ENCODE measurements at regions of chr11 and their contacts with region 1.

Region 1: DNA sequence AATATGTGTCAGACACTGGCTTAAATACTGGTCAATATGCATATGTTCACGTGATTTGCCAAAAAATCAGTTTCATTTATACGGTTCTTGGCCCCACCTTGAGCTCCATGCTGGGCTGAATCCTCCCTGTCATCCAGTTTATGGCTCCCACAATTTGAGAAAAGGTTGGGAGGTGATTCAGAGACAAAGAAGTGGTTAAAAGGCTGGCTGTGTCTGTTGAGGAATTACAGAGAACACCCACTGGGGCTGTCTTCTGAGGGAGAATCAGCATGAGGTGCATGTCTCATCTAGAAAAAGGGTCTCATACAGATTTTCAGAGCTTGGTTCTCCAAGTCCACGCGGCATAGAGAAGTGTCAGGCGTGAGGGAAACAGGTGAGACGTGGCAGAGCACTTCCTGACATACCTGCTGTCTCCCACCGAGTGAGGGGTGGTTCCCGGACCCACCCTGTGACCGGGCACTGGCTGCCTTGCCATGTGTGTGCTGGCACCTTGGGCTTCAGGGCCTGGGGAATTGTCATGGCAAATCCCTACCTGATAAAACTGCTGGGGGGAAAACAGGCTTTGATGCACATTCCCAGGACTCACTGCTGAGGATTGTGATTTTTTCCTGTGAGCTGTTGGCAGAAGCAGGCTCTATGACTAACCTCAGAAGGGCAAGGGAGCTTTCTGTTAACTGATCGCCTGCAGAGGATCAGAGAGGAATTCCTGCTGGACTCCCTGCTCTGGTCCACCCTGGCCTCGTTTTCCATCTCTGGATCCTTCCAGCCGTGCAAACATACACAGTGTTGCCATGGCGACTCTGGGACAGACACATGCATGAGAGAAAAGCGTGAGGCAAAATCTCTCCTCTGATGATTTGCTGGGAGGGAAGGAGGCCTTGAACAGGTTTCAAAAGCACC is 223.6 kb downstream of the ADAMTS15 start:
- DNase-seq: no peak
- H3K4me3 ChIP-seq: no peak overlapping the region
- H3K27ac ChIP-seq: peak overlapping the region; percentile 26
- H3K4me1 ChIP-seq: peaks cover 18% of the 10 kb centered on the region
- H3K27me3 ChIP-seq: no peaks in the 10 kb centered on the region
- CTCF ChIP-seq: no peak
- POLR2A ChIP-seq: no peak

Region 2: GRCh38 chr11:130448416-130449309 is 223.4 kb before region 1 on chr11 and contains the start of gene ADAMTS15:
- intact Hi-C with region 1: loop called (anchors 10 kb)
- DNase-seq: no peak
- H3K4me3 ChIP-seq: peak within 1 kb of the TSS; percentile 54 to 74
- H3K27ac ChIP-seq: peak within 1 kb of the TSS; percentile 68
- H3K4me1 ChIP-seq: peaks cover 36% of the 10 kb centered on the region
- H3K27me3 ChIP-seq: no peaks in the 10 kb centered on the region
- CTCF ChIP-seq: no peak
- POLR2A ChIP-seq: no peak
- total RNA-seq, gene ADAMTS15: 12.0 TPM

Region 3: GRCh38 chr11:130710497-130711012 is 38.5 kb after region 1 on chr11:
- intact Hi-C with region 1: no loop called
- DNase-seq: no peak
- H3K4me3 ChIP-seq: no peak overlapping the region
- H3K27ac ChIP-seq: no peak overlapping the region
- H3K4me1 ChIP-seq: no peaks in the 10 kb centered on the region
- H3K27me3 ChIP-seq: no peaks in the 10 kb centered on the region
- CTCF ChIP-seq: no peak
- POLR2A ChIP-seq: no peak

Region 4: DNA sequence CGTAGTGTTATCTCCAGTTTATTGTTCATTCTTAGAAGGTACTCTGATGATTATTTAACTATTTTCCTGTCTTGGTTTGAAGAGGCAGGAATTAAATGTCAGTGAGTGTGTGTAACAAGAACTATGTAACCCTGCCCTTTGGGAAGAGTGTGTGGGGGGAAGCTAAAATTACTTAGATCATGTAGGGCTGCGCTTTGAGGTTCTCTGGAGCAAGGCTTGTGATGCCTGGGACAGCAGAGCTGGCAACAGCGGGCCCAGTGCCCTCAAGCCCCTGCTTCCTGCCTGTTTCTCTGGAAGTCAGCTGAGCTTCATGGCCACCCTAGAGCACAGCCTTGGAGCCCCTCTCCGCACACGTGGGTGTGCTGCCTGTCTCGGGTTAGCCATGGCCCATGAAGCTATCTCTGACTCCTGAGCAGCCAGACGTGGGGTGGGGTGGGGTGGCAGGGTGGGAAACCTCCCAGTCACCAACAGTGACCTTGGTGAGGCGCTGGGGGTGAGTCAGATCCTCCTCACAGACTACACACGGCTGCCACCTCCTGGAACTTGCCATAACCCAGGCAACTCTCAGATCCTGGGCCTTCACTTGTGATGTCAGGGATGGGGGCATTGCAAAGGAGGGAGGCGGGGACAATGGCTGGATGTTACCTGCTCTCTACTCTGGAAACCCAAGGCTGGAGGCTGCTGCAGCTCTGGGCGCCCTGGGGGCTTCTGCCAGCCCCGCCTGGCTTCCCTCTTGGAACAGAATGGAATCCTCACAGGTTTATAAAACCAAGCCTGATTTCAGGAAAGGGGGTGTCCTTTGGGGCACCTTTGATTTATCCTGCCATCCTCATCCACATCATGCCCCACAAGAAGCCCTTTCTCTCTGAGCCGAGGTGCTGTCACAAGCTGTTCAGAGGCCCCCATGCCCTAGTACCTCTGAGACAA is 155.7 kb after region 1 on chr11:
- intact Hi-C with region 1: loop called (anchors 10 kb)
- DNase-seq: peak in 1 of 2 donors; percentile 93
- H3K4me3 ChIP-seq: no peak overlapping the region
- H3K27ac ChIP-seq: no peak overlapping the region
- H3K4me1 ChIP-seq: peaks cover 24% of the 10 kb centered on the region
- H3K27me3 ChIP-seq: no peaks in the 10 kb centered on the region
- CTCF ChIP-seq: no peak
- POLR2A ChIP-seq: no peak

Region 5: GRCh38 chr11:131118247-131118646 is 446.2 kb after region 1 on chr11:
- intact Hi-C with region 1: no loop called
- DNase-seq: peak in 1 of 2 donors; percentile 70
- H3K4me3 ChIP-seq: no peak overlapping the region
- H3K27ac ChIP-seq: no peak overlapping the region
- H3K4me1 ChIP-seq: no peaks in the 10 kb centered on the region
- H3K27me3 ChIP-seq: no peaks in the 10 kb centered on the region
- CTCF ChIP-seq: no peak
- POLR2A ChIP-seq: no peak

Measured in vagina (tissue), 2 donors.